Activated CD4-positive, alpha-beta T cell treated with anti-CD3 and anti-CD28 coated beads, Interleukin-2, amount 10 ng/mL, durations not matched to agents 24 days and 14 days (primary cell): ENCODE measurements at regions of chr20 and their contacts with region 1.

Region 1: GRCh38 chr20:10357974-10358373 is 76.0 kb downstream of the MKKS start:
- DNase-seq: no peak
- H3K4me3 Mint-ChIP-seq: no peak overlapping the region
- H3K27ac Mint-ChIP-seq: no peak overlapping the region
- H3K4me1 Mint-ChIP-seq: peaks cover 4% of the 10 kb centered on the region
- H3K27me3 Mint-ChIP-seq: peaks cover 8% of the 10 kb centered on the region

Region 2: DNA sequence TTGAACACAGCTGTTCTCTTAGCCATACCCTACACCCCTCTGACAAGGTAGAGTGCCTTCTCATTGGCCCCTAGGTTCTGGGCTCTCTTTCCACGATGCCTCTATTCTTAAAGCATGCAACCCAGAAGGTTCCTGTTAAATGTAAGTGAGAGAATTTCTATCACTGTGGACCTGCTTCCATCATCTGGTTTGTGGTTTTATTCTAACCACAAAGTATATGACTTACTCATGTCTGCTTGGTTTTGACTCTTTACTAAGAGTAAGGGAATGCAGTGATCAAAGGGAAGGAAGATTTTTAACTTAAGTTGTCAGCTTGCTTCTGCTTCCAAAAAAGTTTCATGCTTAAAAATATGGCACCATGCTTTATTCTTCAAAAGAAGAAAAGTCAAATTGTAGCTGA is 243.0 kb before region 1 on chr20:
- intact Hi-C with region 1: loop called (anchors 10 kb)
- DNase-seq: no peak
- H3K4me3 Mint-ChIP-seq: no peak overlapping the region
- H3K27ac Mint-ChIP-seq: no peak overlapping the region
- H3K4me1 Mint-ChIP-seq: peaks cover 2% of the 10 kb centered on the region
- H3K27me3 Mint-ChIP-seq: peaks cover 4% of the 10 kb centered on the region

Region 3: GRCh38 chr20:10511509-10512251 is 153.7 kb after region 1 on chr20:
- intact Hi-C with region 1: loop called (anchors 5 kb)
- DNase-seq: peak; percentile 90
- H3K4me3 Mint-ChIP-seq: peak overlapping the region; percentile 50
- H3K27ac Mint-ChIP-seq: peak overlapping the region; percentile 82
- H3K4me1 Mint-ChIP-seq: peaks cover 38% of the 10 kb centered on the region
- H3K27me3 Mint-ChIP-seq: peaks cover 3% of the 10 kb centered on the region

Region 4: GRCh38 chr20:10611357-10611756 is 253.4 kb after region 1 on chr20:
- intact Hi-C with region 1: no loop called
- DNase-seq: no peak
- H3K4me3 Mint-ChIP-seq: no peak overlapping the region
- H3K27ac Mint-ChIP-seq: no peak overlapping the region
- H3K4me1 Mint-ChIP-seq: no peaks in the 10 kb centered on the region
- H3K27me3 Mint-ChIP-seq: no peaks in the 10 kb centered on the region

Region 5: GRCh38 chr20:10793766-10794165 is 435.8 kb after region 1 on chr20:
- intact Hi-C with region 1: no loop called
- DNase-seq: no peak
- H3K4me3 Mint-ChIP-seq: no peak overlapping the region
- H3K27ac Mint-ChIP-seq: no peak overlapping the region
- H3K4me1 Mint-ChIP-seq: no peaks in the 10 kb centered on the region
- H3K27me3 Mint-ChIP-seq: no peaks in the 10 kb centered on the region